ENCODE measurements at regions of chr1 and their contacts with region 1.

Region 1: GRCh38 chr1:110554871-110555801 is 36.2 kb upstream of the KCNA10 start:
- DNase-seq: peak; percentile 59 to 69
- ATAC-seq: peak; percentile 80 to 93 (median 90)
- H3K4me3 ChIP-seq: peak overlapping the region; percentile 58
- H3K27ac ChIP-seq: no peak overlapping the region
- H3K4me1 ChIP-seq: peaks cover 6% of the 10 kb centered on the region
- H3K27me3 ChIP-seq: peaks cover 0 to 40% (median 1%) of the 10 kb centered on the region in 3 donors
- CTCF ChIP-seq: peak; percentile 76

Region 2: GRCh38 chr1:110462964-110463363 is 92.2 kb before region 1 on chr1:
- intact Hi-C with region 1: no loop called
- DNase-seq: no peak
- ATAC-seq: no peak
- H3K4me3 ChIP-seq: no peak overlapping the region
- H3K27ac ChIP-seq: no peak overlapping the region
- H3K4me1 ChIP-seq: peaks cover 14% of the 10 kb centered on the region
- H3K27me3 ChIP-seq: no peaks in the 10 kb centered on the region
- CTCF ChIP-seq: no peak

Region 3: GRCh38 chr1:110615548-110616492 is 60.7 kb after region 1 on chr1:
- intact Hi-C with region 1: loop called (anchors 1 to 2 kb)
- DNase-seq: peak; percentile 38 to 69
- ATAC-seq: peak; percentile 59 to 82 (median 74)
- H3K4me3 ChIP-seq: no peak overlapping the region
- H3K27ac ChIP-seq: no peak overlapping the region
- H3K4me1 ChIP-seq: no peaks in the 10 kb centered on the region
- H3K27me3 ChIP-seq: peaks cover 0 to 40% (median 4%) of the 10 kb centered on the region in 3 donors
- CTCF ChIP-seq: peak; percentile 77

Measured in psoas muscle (tissue), 8 donors.